ENCODE measurements at regions of chr16 and their contacts with region 1.

Region 1: DNA sequence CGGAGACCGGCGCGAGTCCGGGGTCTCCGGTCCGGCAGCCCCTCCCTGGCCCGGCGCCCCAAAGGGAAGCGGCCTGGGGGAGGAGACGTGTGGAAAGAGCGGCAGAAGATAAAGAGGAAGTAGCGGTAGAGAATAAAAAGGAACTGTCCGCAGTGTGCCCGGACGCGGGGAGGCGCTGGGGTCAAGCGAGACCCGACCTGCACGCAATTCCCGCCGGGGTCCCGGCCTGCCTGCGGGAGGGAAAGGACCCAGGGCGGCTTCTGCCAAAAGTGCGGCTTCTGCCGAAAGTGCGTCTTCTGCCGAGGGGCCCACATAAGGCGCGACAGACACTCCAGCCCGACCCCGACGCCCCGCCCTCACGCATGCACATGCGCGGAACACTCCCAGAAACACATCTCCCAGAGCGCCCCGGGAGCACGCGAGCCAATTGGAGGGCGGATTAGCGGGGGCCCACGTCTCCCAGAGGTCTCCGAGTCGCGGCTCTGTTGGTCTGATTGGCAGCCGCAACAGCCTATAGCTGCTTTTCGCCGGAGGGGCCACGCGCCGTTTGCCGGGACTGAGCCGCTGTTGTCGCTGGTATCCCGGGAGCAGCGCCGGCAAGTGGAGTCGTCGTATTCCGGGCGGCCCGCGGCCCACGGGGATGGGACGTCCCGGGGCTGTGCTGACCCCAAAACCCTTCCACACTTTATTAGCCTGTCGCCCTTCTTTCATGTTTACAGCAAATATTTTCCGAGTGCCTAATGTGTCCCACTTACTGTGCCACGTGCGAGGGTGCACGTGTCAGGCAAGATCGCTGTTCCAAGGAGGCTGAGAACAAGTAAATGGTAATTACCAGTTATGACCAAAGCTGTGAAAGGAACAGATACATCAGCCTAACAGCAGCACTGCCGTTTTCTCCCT is 8.0 kb upstream of the MEFV start:
- DNase-seq: peak; percentile 84
- ATAC-seq: peak; percentile 96
- H3K4me3 ChIP-seq: peak overlapping the region; percentile 82
- H3K27ac ChIP-seq: peak overlapping the region; percentile 93
- H3K4me1 ChIP-seq: peaks cover 8% of the 10 kb centered on the region; the same call in 1 of the 2 replicates
- H3K27me3 ChIP-seq: no peaks in the 10 kb centered on the region
- CTCF ChIP-seq: peak; percentile 38 to 47 (median 44)
- EP300 ChIP-seq: 0 out of 4 replicates have a peak, but pooled peaks of 1 of the 2 experiments have one; percentile 18
- POLR2A ChIP-seq: peak; percentile 86
- RAD21 ChIP-seq: peak; percentile 45; the same call in 1 of the 2 replicates

Region 2: DNA sequence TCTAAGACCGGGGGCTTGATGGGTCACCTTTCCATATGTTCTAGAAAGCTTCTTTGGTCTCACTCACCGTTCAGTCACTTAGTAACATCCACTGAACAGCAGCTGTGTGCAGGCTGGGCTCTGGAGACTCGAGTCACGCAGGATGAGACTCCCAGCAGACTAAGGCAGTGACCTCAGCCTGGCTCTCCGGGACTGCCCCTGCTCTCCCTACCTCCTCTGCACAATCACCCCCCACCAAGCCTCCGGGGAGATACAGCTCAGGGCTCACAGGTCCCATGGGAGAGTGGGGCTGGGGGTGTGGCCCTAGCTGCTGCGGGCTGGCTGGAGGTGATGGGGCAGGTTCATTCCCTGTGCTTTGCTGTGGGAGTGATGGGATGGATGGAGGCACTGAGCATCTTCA is 367.3 kb before region 1 on chr16:
- CTCF ChIA-PET with region 1: no interaction called
- POLR2A ChIA-PET with region 1: no interaction called
- RAD21 ChIA-PET with region 1: no interaction called
- SMC1A ChIA-PET with region 1: no interaction called
- in situ Hi-C with region 1: no loop called
- intact Hi-C with region 1: no loop called
- DNase-seq: no peak
- ATAC-seq: peak; percentile 90
- H3K4me3 ChIP-seq: no peak overlapping the region
- H3K27ac ChIP-seq: no peak overlapping the region
- H3K4me1 ChIP-seq: no peaks in the 10 kb centered on the region
- H3K27me3 ChIP-seq: no peaks in the 10 kb centered on the region
- CTCF ChIP-seq: no peak
- EP300 ChIP-seq: no peak
- POLR2A ChIP-seq: no peak
- RAD21 ChIP-seq: no peak

Region 3: DNA sequence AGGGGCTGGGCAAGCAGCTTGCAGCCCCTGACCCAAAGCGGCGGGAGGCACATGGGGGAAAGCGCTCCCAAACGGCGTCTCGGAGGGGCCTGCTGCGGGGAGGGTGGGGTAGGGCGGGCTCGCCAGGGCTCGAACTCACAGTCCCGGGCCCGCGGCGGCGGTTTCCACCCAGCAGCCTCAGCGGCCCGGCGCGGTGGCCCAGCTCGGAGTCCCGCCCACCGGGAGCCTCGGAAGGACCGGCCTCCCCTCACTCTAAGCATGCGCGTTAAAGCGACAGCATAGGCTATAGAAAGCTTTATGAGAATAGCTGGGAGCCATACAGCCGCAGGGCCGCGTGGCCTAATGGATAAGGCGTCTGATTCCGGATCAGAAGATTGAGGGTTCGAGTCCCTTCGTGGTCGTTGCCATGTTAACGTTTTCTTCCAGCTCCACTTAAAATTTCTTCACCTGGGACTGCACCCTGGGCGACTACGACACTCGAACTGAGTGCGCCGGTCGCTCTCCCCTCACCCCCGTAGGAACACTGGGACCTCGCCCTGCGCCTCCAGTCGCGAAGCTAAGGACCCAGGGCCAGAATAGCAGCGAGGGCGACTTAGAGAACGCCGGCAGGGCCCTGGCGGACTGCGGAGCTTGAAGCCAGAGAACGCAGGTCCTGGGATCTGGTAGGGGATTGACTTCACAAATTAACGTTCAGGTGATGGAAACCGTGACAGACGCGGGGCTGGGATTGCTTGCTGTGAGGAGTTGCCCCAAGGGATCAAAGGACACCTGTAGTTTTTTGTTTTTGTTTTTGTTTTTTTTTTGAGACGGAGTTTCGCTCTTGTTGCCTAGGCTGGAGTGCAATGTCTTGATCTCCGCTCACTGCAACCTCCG is 113.8 kb before region 1 on chr16:
- CTCF ChIA-PET with region 1: no interaction called
- POLR2A ChIA-PET with region 1: no interaction called
- RAD21 ChIA-PET with region 1: no interaction called
- SMC1A ChIA-PET with region 1: no interaction called
- in situ Hi-C with region 1: no loop called
- intact Hi-C with region 1: loop called (anchors 10 kb)
- DNase-seq: peak; percentile 95
- ATAC-seq: peak; percentile 91
- H3K4me3 ChIP-seq: peak overlapping the region; percentile 94
- H3K27ac ChIP-seq: peak overlapping the region; percentile 70
- H3K4me1 ChIP-seq: peaks cover 3% of the 10 kb centered on the region; the same call in 1 of the 2 replicates
- H3K27me3 ChIP-seq: no peaks in the 10 kb centered on the region
- CTCF ChIP-seq: no peak
- EP300 ChIP-seq: peak in 1 of 2 experiments; percentile 65; a peak in 1 of 4 replicates
- POLR2A ChIP-seq: no peak
- RAD21 ChIP-seq: no peak

Region 4: DNA sequence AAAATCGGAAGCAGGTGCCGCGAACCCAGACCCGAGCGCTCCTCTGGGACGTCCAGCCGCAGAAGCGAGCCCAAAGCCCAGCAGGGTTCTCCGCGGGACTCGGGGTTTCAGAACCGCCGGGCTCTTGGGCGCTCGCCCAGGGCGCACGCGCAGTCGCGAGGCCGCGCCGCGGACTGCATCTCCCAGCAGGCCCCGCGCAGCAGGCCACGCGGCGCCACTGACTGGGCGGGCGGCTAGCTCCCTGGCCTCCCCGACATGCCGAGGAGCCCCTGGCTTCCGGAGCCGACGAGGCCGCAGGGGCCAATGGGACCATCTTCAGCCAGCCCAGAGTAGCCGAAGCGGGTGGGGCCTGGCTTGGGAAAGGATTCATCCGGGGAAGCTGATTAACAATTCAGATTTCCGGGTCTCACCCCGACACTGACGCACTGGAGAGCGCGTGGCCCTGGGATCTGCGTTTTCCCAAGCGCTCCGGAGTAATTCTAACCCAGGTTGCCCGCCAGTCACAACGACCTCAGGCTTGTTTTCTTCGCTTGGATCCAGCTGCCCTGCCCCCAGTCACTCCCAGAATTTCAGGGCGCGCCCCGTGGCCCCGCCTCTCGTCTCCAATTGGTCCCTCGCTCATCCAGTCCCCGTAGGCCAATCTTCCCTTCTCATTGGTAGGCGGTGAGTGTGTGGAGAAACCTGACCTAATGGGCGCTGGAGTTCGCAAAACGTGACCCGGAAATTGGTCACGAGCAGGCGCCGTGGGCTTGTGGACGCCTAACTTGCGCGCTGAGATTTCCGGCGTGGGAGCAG is 18.5 kb after region 1 on chr16 and contains the start of gene ZNF263:
- CTCF ChIA-PET with region 1: interaction called, 20 read pairs
- POLR2A ChIA-PET with region 1: interaction called, 10 read pairs
- RAD21 ChIA-PET with region 1: interaction called, 4 read pairs
- SMC1A ChIA-PET with region 1: interaction called, 4 read pairs
- in situ Hi-C with region 1: no loop called
- intact Hi-C with region 1: loop called (anchors 1 kb)
- DNase-seq: peak; percentile 88
- ATAC-seq: peak; percentile 95
- H3K4me3 ChIP-seq: peak within 1 kb of the TSS; percentile 91
- H3K27ac ChIP-seq: peak within 1 kb of the TSS; percentile 98
- H3K4me1 ChIP-seq: peaks cover 10% of the 10 kb centered on the region; the same call in 1 of the 2 replicates
- H3K27me3 ChIP-seq: no peaks in the 10 kb centered on the region
- CTCF ChIP-seq: no peak
- EP300 ChIP-seq: no peak; a peak in 1 of 4 replicates
- POLR2A ChIP-seq: peak; percentile 71
- RAD21 ChIP-seq: no peak
- polyA plus RNA-seq, gene ZNF263: 4.7 to 5.3 TPM

Region 5: GRCh38 chr16:3317315-3317999 is 53.1 kb after region 1 on chr16:
- CTCF ChIA-PET with region 1: no interaction called
- POLR2A ChIA-PET with region 1: no interaction called
- RAD21 ChIA-PET with region 1: no interaction called
- SMC1A ChIA-PET with region 1: no interaction called
- in situ Hi-C with region 1: no loop called
- intact Hi-C with region 1: no loop called
- DNase-seq: no peak
- ATAC-seq: no peak
- H3K4me3 ChIP-seq: no peak overlapping the region
- H3K27ac ChIP-seq: no peak overlapping the region
- H3K4me1 ChIP-seq: no peaks in the 10 kb centered on the region
- H3K27me3 ChIP-seq: no peaks in the 10 kb centered on the region
- CTCF ChIP-seq: no peak
- EP300 ChIP-seq: no peak
- POLR2A ChIP-seq: no peak
- RAD21 ChIP-seq: no peak

Region 6: DNA sequence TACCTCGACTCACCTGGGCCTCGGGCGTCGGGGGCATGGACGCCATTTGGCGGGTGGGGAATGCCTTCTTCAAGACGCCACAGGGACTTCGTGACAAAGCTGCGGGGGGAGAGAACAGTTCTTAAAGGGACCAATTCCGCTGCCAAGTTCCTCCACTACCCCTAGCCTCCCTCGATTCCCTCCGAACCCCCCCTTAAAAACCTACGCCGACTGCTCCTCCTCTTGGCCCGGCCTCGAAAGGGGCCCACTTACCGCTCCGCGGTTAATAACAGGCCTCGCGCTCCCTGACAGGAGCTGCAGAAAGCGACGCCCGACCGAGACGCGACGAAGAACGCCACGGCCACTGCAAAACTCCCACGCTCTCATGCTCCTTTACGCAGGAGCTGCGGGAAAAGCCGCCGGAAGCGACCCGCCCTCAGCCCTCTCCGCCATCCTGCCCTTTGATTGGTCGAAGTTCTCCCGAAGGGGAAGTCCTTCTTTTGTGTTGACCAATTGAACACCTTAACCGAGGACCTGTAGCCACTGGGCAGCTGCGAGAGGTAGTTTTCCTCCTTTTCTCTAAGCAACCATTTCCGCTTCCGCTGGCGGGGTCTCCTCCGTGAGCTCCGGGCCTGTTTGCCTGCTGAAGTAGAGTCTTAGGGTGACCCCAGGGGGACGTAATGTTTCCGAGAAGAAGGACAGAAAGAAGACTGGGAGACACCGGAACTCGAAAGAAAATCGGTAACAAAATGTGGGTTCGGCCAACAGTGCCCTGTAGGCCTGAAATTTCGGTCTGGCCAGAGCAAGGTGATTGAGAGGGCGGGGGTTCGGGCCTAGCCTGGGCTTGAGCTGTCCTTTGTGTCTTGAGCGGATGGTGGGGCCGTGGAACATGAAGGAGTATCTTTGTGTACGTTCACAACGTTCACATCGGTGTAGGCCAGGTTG is 179.0 kb after region 1 on chr16 and contains the starts of genes NAA60 and ZNF597:
- CTCF ChIA-PET with region 1: interaction called, 12 read pairs
- POLR2A ChIA-PET with region 1: no interaction called
- RAD21 ChIA-PET with region 1: interaction called, 3 read pairs
- SMC1A ChIA-PET with region 1: interaction called, 5 read pairs
- in situ Hi-C with region 1: no loop called
- intact Hi-C with region 1: no loop called
- DNase-seq: peak; percentile 74
- ATAC-seq: peak; percentile 99
- H3K4me3 ChIP-seq: peak within 1 kb of the TSS; percentile 74
- H3K27ac ChIP-seq: peak within 1 kb of the TSS; percentile 75
- H3K4me1 ChIP-seq: no peaks in the 10 kb centered on the region
- H3K27me3 ChIP-seq: no peaks in the 10 kb centered on the region
- CTCF ChIP-seq: no peak
- EP300 ChIP-seq: no peak
- POLR2A ChIP-seq: peak; percentile 85
- RAD21 ChIP-seq: peak; percentile 23; the same call in 1 of the 2 replicates
- polyA plus RNA-seq, gene NAA60: 6.2 to 9.1 TPM
- polyA plus RNA-seq, gene ZNF597: 0.80 to 0.85 TPM

Region 7: GRCh38 chr16:3503523-3503922 is 239.1 kb after region 1 on chr16:
- CTCF ChIA-PET with region 1: interaction called, 3 read pairs
- POLR2A ChIA-PET with region 1: no interaction called
- RAD21 ChIA-PET with region 1: no interaction called
- SMC1A ChIA-PET with region 1: no interaction called
- in situ Hi-C with region 1: no loop called
- intact Hi-C with region 1: loop called (anchors 5 kb)
- DNase-seq: no peak
- ATAC-seq: peak; percentile 8; the same call in 2 of the 3 replicates
- H3K4me3 ChIP-seq: no peak overlapping the region
- H3K27ac ChIP-seq: no peak overlapping the region
- H3K4me1 ChIP-seq: peaks cover 12% of the 10 kb centered on the region
- H3K27me3 ChIP-seq: no peaks in the 10 kb centered on the region
- CTCF ChIP-seq: no peak
- EP300 ChIP-seq: no peak
- POLR2A ChIP-seq: no peak
- RAD21 ChIP-seq: no peak

Measured in GM12878 (cell line).